Left colon (tissue), 2 donors: ENCODE measurements at regions of chr6 and their contacts with region 1.

Region 1: GRCh38 chr6:3987053-3987452 is 91.9 kb downstream of the FAM217A start:
- DNase-seq: peak; percentile 39 to 48
- ATAC-seq: peak; percentile 86

Region 2: DNA sequence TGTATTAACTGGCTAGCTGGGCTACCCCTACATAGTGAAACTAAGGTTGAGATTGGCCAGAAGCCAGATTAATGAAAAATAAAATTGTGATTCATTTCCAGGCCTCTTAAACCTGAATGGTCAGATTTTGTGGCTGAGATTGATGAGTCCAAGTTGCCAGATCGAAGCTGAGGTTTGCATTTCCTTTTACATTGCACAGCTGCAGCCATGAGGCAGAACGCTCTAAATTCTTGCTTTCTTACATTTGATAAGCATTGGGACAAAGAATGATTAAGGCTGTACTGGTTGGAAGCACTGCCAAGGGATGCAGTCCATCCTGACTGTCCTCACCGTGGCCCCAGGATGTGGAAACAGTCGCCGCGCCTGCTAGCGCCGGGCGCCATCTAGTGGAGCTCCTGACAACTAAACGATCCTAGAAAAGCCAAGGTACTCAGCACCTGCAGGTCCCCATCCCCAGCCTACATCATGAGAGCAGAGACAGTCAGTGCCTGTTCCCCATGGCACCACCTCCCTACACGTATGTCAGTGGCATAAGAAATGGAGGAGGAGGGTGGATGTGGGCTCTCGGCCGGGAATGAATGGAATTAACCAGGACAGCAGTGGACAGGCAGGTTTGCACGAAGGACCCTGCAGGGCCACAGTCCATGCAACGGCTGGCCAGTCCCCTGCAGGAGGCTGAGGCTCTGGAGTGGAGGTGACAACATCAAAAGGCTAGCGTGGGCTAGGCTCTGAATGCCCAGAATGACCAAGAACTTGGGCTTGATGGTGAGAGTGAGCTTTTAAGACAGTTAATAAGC is 254.5 kb before region 1 on chr6:
- intact Hi-C with region 1: loop called in 1 of 2 experiments (anchors 10 kb)
- DNase-seq: peak; percentile 71 to 83
- ATAC-seq: peak; percentile 98

Region 3: DNA sequence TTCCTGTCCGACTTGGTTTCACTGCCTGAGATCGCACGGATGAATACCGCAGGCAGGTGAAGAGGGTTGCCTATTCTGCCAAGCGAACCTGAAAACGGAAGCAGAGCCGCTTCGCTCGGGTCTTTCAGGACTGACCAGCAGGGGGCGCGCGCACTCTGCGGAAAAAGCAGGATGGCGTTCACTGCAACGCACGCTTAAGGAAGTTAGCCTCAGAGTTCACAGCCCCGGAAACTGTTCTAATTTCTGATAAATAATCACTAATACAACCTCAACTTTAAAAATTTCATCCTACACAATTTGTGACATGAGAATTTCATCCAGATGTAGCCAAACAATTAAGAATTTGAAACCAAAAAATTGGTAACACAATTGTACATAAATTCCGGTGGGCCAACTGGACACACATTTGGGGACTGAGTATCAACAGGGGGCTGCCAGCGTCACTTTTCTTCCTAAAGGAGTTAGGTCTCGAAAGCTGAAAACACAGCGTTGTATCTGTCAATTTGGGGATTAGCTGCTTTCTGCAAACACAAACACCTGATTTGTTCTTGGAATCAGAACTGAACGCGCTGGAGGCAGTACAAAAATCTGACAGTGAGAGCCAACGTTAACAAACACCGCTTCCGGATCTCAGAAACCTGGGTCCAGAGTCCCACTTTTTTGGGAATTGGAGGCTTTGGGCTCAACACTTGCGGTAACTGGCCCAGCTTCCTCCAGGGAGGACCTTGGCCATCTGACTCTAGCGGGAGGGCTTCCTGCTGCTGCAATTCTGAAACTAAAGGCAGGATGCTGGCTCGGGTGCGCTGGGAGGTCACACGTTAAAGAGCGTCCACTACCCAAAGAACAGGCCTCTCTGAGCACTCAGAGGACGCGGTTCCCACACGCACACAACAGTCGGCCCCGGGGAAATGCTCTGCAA is 244.4 kb before region 1 on chr6:
- intact Hi-C with region 1: loop called (anchors 10 kb)
- DNase-seq: peak; percentile 70 to 90
- ATAC-seq: peak; percentile 94

Region 4: GRCh38 chr6:3776881-3777507 is 210.1 kb before region 1 on chr6:
- intact Hi-C with region 1: no loop called
- DNase-seq: no peak
- ATAC-seq: no peak

Region 5: DNA sequence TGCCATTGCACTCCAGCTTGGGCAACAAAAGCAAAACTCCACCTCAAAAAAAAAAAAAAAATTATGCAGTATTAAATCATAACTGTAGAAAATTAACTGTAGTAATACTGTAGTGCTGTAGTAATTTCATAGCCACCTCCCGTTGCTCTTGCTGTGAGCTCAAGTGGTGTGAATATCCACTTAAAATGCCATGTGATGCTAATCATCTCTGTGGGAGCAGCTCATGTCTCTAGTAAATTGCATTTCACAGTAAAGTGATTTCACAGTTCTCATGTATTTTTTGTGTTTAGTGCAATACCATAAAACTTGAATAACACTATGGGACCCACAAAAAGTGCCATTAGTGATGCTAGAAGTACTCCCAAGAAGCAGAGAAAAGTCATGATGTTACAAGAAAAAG is 106.2 kb after region 1 on chr6:
- intact Hi-C with region 1: no loop called
- DNase-seq: no peak
- ATAC-seq: no peak